ENCODE measurements at regions of chr12 and their contacts with region 1.

Region 1: GRCh38 chr12:121110211-121110940 is 22.3 kb upstream of the P2RX7 start:
- DNase-seq: peak; percentile 89
- H3K4me3 Mint-ChIP-seq: no peak overlapping the region
- H3K27ac Mint-ChIP-seq: peak overlapping the region; percentile 37
- H3K4me1 Mint-ChIP-seq: peaks cover 6% of the 10 kb centered on the region
- H3K27me3 Mint-ChIP-seq: no peaks in the 10 kb centered on the region

Region 2: GRCh38 chr12:121005346-121005815 is 105.0 kb before region 1 on chr12:
- intact Hi-C with region 1: loop called (anchors 1 kb)
- DNase-seq: peak; percentile 86
- H3K4me3 Mint-ChIP-seq: no peak overlapping the region
- H3K27ac Mint-ChIP-seq: peak overlapping the region; percentile 51
- H3K4me1 Mint-ChIP-seq: peaks cover 5% of the 10 kb centered on the region
- H3K27me3 Mint-ChIP-seq: no peaks in the 10 kb centered on the region

Region 3: DNA sequence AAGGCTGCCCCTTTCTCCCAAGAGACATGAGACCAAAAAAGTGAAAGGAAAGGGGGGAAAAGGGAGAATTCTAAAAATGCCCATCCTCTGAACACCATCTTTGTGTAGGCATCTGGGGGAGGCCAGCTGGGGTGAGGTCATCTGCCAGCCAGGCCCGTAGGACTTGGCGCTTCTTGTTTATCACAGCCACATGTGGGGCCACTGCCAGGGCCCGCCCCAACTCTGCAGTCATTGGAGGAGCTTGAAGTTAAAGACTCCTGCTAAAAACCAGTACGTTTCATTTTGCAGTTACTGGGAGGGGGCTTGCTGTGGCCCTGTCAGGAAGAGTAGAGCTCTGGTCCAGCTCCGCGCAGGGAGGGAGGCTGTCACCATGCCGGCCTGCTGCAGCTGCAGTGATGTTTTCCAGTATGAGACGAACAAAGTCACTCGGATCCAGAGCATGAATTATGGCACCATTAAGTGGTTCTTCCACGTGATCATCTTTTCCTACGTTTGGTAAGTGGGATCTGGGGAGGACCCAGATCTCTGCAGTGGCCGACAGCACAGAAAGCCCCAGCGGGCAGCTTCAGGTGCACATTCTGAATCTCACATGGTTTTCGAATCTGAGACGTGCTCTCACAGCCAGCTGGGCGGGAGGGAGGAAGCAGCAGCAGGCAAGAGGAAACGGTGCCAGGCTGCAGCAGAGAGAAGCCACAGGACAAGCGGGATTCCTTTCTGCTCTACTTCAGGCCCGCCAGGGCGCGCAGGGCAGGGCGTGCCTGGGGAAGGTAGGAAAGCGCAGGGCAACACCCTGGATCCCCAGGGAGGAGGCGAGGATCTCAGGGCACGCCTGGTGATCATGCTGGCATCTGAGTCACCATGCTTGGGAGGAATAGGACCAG is 22.5 kb after region 1 on chr12 and contains the start of gene P2RX7:
- intact Hi-C with region 1: no loop called
- DNase-seq: peak; percentile 83
- H3K4me3 Mint-ChIP-seq: peak within 1 kb of the TSS; percentile 92
- H3K27ac Mint-ChIP-seq: peak within 1 kb of the TSS; percentile 89
- H3K4me1 Mint-ChIP-seq: peaks cover 61% of the 10 kb centered on the region
- H3K27me3 Mint-ChIP-seq: no peaks in the 10 kb centered on the region
- total RNA-seq, gene P2RX7: 6.2 and 7.0 TPM in 2 replicates